H1 (cell line): ENCODE measurements at regions of chr11 and their contacts with region 1.

Region 1: DNA sequence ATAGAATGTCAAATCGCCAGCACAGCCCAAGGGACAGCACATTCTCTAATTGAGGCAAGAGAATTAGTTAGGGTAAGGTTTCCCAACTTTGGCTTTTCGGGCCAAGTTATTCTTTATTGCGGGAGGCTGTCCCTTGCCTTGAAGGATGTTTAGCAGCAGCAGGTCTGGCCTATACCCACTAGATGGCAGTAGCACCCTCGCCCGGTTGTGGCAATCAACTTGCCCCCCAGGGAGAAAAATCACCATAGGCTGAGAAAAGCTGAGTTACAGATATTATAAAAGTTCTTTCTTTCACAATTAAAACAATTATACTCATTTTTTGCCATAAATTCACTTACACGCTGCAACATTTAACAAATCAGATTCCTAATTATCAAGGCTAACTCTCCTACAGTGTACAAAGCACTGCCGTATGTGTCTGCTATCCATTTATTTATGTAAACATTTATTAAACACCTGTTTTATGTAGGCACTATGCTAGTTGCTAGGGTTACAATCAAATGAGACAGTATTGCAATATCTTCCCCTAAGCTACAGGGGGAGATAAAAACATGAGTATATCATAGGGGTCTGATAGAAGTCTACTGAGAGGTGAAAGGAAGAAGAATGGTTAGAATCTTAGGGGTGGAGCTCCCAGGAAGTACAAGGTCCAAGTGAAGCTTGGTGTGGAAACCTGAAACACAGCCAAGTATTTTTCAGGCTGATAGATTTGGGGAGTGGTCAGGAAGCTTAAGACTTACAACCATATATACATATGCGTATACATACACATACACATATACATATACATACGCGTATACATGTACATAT is 452.3 kb downstream of the RAB38 start:
- DNase-seq: peak in 1 of 2 experiments; percentile 66
- H3K4me3 ChIP-seq: no peak overlapping the region
- H3K27ac ChIP-seq: no peak overlapping the region
- H3K4me1 ChIP-seq: no peaks in the 10 kb centered on the region
- H3K27me3 ChIP-seq: no peaks in the 10 kb centered on the region
- CTCF ChIP-seq: peak; percentile 71 to 81 (median 81)
- EP300 ChIP-seq: no peak
- POLR2A ChIP-seq: no peak
- RAD21 ChIP-seq: peak; percentile 72 to 78

Region 2: DNA sequence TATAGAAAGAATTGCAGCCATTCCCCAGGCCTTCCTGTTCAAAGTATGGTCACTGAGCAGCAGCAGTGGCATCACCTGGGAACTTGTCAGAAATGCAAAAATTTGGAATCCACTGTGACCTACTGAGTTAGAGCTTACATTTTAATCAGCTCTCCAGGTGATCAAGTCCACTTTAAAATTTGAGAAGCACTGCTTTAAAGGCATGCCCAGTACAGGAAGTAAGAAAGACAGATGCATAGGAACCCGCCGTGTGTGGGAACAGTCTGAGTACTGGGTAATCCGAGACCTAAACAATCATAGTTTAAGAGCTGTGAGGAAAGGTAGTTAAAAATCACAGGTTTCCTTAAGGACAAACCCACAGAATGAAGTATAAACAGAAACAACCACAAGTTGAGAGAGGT is 10.2 kb before region 1 on chr11:
- CTCF ChIA-PET with region 1: interaction called, 15 read pairs
- POLR2A ChIA-PET with region 1: no interaction called
- DNase-seq: no peak
- H3K4me3 ChIP-seq: no peak overlapping the region
- H3K27ac ChIP-seq: no peak overlapping the region
- H3K4me1 ChIP-seq: peaks cover 1 to 8% (median 4%) of the 10 kb centered on the region in 4 experiments; a peak in 4 of 7 replicates
- H3K27me3 ChIP-seq: no peaks in the 10 kb centered on the region
- CTCF ChIP-seq: no peak
- EP300 ChIP-seq: no peak
- POLR2A ChIP-seq: no peak
- RAD21 ChIP-seq: no peak

Region 3: GRCh38 chr11:87743007-87743406 is 20.0 kb after region 1 on chr11:
- CTCF ChIA-PET with region 1: interaction called, 16 read pairs
- POLR2A ChIA-PET with region 1: no interaction called
- DNase-seq: no peak
- H3K4me3 ChIP-seq: no peak overlapping the region
- H3K27ac ChIP-seq: no peak overlapping the region
- H3K4me1 ChIP-seq: no peaks in the 10 kb centered on the region
- H3K27me3 ChIP-seq: no peaks in the 10 kb centered on the region
- CTCF ChIP-seq: peak in 2 of 3 experiments; percentile 45 to 58; a peak in 2 of 4 replicates
- EP300 ChIP-seq: no peak
- POLR2A ChIP-seq: no peak
- RAD21 ChIP-seq: peak; percentile 65 to 66